K562 (cell line): ENCODE measurements at regions of chr1 and their contacts with region 1.

Region 1: DNA sequence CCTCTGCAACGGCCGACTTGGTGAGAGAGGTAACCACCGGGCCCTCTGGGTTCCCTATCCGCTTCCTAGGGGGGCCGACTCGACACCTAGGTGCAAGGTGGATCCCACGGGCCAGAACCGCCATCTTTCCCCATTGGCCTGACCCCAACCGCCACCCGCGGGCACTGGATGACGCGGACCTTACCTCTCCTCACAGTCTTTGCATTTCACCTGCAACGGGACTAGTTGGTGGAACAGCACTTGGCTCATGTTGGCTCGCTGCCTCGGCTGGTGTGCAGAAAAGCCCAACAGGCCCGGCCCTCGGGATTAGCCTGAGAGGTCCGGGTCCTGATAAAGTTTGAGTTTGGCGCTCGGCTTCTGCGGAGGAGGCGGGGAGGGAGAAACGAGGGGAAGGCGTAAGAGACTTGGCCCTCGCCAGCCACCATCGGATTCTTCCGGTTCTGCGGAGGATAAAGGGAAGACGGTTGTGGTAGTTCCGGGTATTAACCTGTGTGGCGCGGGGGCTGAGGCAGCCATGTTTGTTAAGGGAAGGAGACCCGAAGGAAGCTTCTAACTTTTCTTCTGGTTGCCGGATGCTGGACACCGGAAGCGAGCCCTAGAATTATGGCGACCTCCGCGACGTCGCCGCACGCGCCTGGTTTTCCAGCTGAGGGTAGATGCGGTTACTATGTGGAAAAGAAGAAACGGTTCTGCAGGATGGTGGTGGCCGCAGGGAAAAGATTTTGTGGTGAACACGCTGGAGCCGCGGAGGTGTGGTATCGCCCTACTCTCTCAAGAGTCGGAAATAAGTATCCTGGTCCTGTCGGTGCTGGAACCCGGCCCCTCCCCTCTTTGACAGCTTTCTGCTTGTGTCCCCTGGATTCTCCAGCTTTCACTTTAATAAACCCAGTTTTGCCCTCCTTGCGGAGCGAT is at the starts of genes SASS6 and TRMT13:
- DNase-seq: peak; percentile 85 to 99 (median 88)
- ATAC-seq: peak; percentile 90
- H3K4me3 ChIP-seq: peak within 1 kb of the TSS; percentile 51
- H3K27ac ChIP-seq: peak within 1 kb of the TSS; percentile 79
- H3K4me1 ChIP-seq: peaks cover 3 to 10% of the 10 kb centered on the region in 2 experiments; a peak in 2 of 5 replicates
- H3K27me3 ChIP-seq: no peaks in the 10 kb centered on the region
- CTCF ChIP-seq: no peak
- EP300 ChIP-seq: peak; percentile 79
- POLR2A ChIP-seq: peak; percentile 84
- RAD21 ChIP-seq: no peak; a peak in 1 of 4 replicates
- polyA plus RNA-seq, gene SASS6: 14.7 to 16.4 TPM
- polyA plus RNA-seq, gene TRMT13: 24.2 to 24.3 TPM

Region 2: DNA sequence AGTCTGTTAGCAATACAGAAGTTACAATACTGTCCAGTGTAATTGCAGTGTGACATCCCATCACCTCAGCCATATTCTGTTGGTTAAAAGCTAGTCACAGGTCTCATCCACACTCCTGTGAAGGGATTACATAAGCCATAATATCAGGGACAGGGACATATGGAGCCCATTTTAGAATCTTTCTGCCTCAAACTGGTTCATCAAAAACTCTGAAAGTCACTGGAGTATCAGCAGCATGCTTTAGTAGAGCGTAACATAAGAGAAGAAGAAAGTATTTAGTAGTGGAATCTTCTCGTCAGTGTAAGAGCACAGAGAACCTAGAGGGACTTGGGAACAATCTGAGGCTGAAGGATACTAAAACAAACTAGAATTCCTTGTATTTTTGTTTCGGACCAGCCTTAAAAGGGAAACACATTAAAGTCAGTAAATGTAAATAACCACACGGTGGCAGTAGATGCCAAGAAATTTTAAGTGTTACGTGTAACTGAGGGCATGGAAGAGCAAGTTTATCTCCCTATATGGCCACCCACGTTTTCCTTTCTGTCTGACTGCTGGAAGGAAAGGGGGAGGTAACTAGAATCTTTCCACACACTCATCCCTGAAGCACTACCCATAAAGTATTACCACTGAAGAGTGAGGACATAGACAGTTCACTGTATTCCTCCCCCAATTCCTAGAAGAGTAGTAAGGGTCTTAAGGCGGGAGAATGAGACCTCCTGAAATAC is 324.3 kb before region 1 on chr1:
- CTCF ChIA-PET with region 1: no interaction called
- POLR2A ChIA-PET with region 1: no interaction called
- in situ Hi-C with region 1: no loop called
- intact Hi-C with region 1: loop called (anchors 2 kb)
- DNase-seq: peak; percentile 74 to 93 (median 82)
- ATAC-seq: peak; percentile 95
- H3K4me3 ChIP-seq: no peak overlapping the region
- H3K27ac ChIP-seq: peak overlapping the region; percentile 69
- H3K4me1 ChIP-seq: peaks cover 0 to 11% of the 10 kb centered on the region in 2 experiments; a peak in 2 of 5 replicates
- H3K27me3 ChIP-seq: no peaks in the 10 kb centered on the region
- CTCF ChIP-seq: peak; percentile 54 to 84 (median 70)
- EP300 ChIP-seq: peak; percentile 52
- POLR2A ChIP-seq: no peak
- RAD21 ChIP-seq: peak; percentile 94 to 95

Region 3: DNA sequence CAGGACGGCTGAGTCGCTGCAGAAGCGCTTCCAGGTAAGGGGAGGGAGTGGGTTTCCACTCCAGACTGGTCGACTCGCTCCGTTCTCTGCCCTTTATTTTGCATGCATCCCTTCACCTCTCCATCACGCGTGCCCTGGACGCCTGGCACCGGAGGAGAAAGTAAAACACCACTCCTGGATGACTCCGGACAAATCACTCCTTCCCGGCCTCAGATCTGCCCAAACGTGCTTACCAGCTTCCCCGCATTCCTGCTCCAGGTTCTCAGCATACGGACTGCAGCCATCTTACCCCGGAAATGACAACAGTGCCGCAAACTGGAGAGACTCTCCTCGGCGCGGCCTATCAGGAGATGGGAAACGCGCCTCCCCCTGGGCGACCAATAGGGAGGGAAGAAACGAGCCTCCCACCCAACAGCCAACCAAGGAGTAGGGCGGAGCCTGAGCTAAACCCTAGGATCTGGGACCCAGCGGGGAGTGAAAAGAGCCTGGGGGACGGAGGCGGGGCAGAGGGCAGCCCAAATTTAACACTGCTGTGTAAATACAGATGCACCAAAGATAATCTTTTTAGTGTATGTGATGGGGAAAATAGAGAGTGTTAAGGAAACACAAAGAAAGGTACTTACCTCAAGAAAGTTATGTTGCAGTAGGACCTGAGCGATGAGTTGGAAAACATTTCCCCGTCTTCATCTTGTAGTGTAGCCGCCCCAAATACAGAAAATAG is 116.9 kb after region 1 on chr1 and contains the start of gene DBT:
- CTCF ChIA-PET with region 1: no interaction called
- POLR2A ChIA-PET with region 1: no interaction called
- in situ Hi-C with region 1: no loop called
- intact Hi-C with region 1: loop called (anchors 5 kb)
- DNase-seq: peak; percentile 98 to 100 (median 100)
- ATAC-seq: peak; percentile 98
- H3K4me3 ChIP-seq: peak within 1 kb of the TSS; percentile 68
- H3K27ac ChIP-seq: peak within 1 kb of the TSS; percentile 83
- H3K4me1 ChIP-seq: peaks cover 4 to 21% of the 10 kb centered on the region in 2 experiments; a peak in 4 of 5 replicates
- H3K27me3 ChIP-seq: no peaks in the 10 kb centered on the region
- CTCF ChIP-seq: no peak
- EP300 ChIP-seq: peak; percentile 49
- POLR2A ChIP-seq: peak; percentile 98
- RAD21 ChIP-seq: 0 out of 4 replicates have a peak, but pooled peaks of 1 of the 2 experiments have one; percentile 7
- polyA plus RNA-seq, gene DBT: 2.7 to 3.3 TPM

Region 4: GRCh38 chr1:100459358-100460114 is 326.7 kb after region 1 on chr1:
- CTCF ChIA-PET with region 1: no interaction called
- POLR2A ChIA-PET with region 1: no interaction called
- in situ Hi-C with region 1: no loop called
- intact Hi-C with region 1: loop called (anchors 10 kb)
- DNase-seq: peak in 3 of 4 experiments; percentile 38 to 76 (median 57)
- ATAC-seq: peak; percentile 89
- H3K4me3 ChIP-seq: no peak overlapping the region
- H3K27ac ChIP-seq: no peak overlapping the region
- H3K4me1 ChIP-seq: peaks cover 0 to 6% of the 10 kb centered on the region in 2 experiments; a peak in 3 of 5 replicates
- H3K27me3 ChIP-seq: no peaks in the 10 kb centered on the region
- CTCF ChIP-seq: peak; percentile 72 to 86 (median 84)
- EP300 ChIP-seq: no peak
- POLR2A ChIP-seq: no peak
- RAD21 ChIP-seq: peak; percentile 90 to 91

Region 5: GRCh38 chr1:100895540-100896483 is 763.0 kb after region 1 on chr1 and contains the start of gene SLC30A7:
- CTCF ChIA-PET with region 1: no interaction called
- POLR2A ChIA-PET with region 1: no interaction called
- in situ Hi-C with region 1: no loop called
- intact Hi-C with region 1: loop called (anchors 10 kb)
- DNase-seq: peak; percentile 87 to 95 (median 90)
- ATAC-seq: peak; percentile 93
- H3K4me3 ChIP-seq: peak within 1 kb of the TSS; percentile 90
- H3K27ac ChIP-seq: peak within 1 kb of the TSS; percentile 92
- H3K4me1 ChIP-seq: peaks cover 0 to 8% of the 10 kb centered on the region in 2 experiments; a peak in 3 of 5 replicates
- H3K27me3 ChIP-seq: no peaks in the 10 kb centered on the region
- CTCF ChIP-seq: no peak; a peak in 1 of 6 replicates
- EP300 ChIP-seq: no peak; the same call in 1 of the 2 replicates
- POLR2A ChIP-seq: peak; percentile 85
- RAD21 ChIP-seq: no peak
- polyA plus RNA-seq, gene SLC30A7: 4.3 to 9.3 TPM